ENCODE measurements at regions of chr5 and their contacts with region 1.

Region 1: DNA sequence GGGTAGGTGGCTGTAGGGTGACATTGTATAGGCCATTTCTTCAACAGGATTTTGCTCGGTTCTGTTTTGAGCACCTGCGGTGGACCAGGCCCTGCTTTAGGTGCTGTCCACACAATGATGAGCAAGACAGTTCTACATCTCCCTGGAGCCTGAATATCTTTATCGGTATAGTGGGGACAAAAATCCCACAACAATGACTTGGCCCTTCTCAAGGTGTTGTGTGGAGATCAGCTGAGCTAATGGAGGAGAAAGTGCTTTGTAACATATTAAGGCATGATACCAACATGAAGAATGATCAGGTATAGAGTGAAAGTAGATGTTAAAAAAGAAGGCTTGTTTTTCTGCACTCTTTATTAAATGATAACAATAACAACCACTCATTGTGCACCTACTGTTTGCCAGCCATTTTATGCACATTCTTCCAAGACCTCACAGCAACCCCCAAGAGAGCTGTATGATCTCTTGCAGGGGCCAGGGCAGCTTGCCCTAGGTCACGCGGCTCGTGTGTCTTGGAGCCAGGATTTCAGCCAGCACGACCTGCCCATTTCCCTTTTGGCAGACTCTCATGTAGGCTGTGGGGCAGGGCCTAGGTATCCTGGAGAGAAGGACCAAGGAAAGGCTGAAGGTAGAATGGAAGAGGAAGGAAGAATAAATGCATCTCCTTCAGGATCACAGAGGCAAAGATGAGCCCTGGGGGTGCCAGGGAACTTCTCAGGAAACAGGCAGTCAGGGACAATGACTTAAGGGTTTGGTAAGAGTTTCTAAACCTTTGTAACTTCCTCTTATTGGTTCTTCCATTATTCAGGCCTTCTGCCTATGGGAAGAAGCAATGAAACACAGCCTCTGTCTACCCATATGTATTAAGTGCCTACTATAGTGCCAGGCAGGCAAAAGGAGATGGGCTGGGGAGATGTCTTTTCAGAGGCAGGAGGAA is 50.0 kb upstream of the PPARGC1B start:
- DNase-seq: no peak
- H3K4me3 ChIP-seq: no peak overlapping the region
- H3K27ac ChIP-seq: peak overlapping the region; percentile 31
- H3K4me1 ChIP-seq: no peaks in the 10 kb centered on the region
- H3K27me3 ChIP-seq: no peaks in the 10 kb centered on the region
- CTCF ChIP-seq: no peak

Region 2: DNA sequence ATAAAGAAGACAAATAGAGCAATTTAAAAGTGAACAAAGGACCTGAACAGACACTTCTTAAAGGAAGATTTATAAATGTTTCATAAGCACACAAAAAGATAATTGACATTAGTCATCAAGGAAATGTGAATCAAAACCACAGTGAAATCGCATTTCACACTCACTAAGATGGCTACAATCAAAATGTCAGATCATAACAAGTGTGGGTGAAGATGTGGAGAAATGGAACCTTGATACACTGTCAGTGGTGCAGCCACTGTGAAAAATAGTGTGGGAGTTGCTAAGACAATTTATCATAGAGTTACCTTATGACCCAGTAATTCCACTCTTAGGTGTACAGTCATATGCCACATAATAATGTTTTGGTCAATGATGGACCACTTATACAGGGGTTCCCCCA is 971.3 kb before region 1 on chr5:
- intact Hi-C with region 1: no loop called
- DNase-seq: no peak
- H3K4me3 ChIP-seq: no peak overlapping the region
- H3K27ac ChIP-seq: no peak overlapping the region
- H3K4me1 ChIP-seq: no peaks in the 10 kb centered on the region
- H3K27me3 ChIP-seq: no peaks in the 10 kb centered on the region
- CTCF ChIP-seq: no peak

Region 3: DNA sequence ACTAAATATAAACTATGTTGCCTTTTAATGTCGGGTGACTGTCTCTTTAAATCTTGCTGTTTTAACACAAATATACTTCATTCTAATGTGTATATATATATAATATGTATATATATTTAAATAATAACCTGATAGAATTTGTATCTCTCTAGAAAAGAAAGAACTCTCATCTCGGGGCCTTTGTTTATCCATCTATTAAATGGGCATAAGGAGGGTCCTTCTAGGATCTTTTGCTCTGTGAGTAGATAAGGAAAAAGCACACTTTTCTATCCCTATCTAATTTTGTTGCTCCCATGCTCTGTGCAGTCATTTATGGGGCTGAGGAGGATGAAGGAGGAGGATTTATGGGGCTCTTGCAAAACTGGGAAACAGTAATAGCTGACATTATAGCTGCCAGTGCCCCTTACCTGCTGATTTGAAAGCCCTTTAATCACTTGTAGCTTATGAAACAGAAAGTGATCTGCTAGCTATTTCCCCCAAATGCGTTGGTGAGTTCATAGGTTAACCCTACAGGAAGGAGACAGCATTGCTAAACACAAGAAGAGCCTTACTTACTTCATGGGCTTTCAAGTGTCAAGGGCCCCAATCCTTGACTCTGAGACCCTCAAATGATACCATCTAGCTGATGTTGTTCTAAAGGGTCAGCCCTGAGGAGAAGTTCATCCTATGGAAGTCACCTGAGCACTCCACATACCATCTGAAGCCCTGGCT is 44.1 kb after region 1 on chr5:
- intact Hi-C with region 1: loop called (anchors 5 kb)
- DNase-seq: no peak
- H3K4me3 ChIP-seq: no peak overlapping the region
- H3K27ac ChIP-seq: no peak overlapping the region
- H3K4me1 ChIP-seq: peaks cover 4% of the 10 kb centered on the region
- H3K27me3 ChIP-seq: no peaks in the 10 kb centered on the region
- CTCF ChIP-seq: no peak

Region 4: GRCh38 chr5:149735066-149735465 is 54.9 kb after region 1 on chr5:
- intact Hi-C with region 1: no loop called
- DNase-seq: no peak
- H3K4me3 ChIP-seq: no peak overlapping the region
- H3K27ac ChIP-seq: no peak overlapping the region
- H3K4me1 ChIP-seq: peaks cover 3% of the 10 kb centered on the region
- H3K27me3 ChIP-seq: no peaks in the 10 kb centered on the region
- CTCF ChIP-seq: no peak

Region 5: GRCh38 chr5:149765932-149766331 is 85.8 kb after region 1 on chr5:
- intact Hi-C with region 1: no loop called
- DNase-seq: no peak
- H3K4me3 ChIP-seq: no peak overlapping the region
- H3K27ac ChIP-seq: no peak overlapping the region
- H3K4me1 ChIP-seq: peaks cover under 1% of the 10 kb centered on the region
- H3K27me3 ChIP-seq: no peaks in the 10 kb centered on the region
- CTCF ChIP-seq: peak; percentile 21

Measured in colonic mucosa (tissue), 4 donors.